Right ventricle myocardium inferior (tissue), 1 donor: ENCODE measurements at regions of chrX and their contacts with region 1.

Region 1: DNA sequence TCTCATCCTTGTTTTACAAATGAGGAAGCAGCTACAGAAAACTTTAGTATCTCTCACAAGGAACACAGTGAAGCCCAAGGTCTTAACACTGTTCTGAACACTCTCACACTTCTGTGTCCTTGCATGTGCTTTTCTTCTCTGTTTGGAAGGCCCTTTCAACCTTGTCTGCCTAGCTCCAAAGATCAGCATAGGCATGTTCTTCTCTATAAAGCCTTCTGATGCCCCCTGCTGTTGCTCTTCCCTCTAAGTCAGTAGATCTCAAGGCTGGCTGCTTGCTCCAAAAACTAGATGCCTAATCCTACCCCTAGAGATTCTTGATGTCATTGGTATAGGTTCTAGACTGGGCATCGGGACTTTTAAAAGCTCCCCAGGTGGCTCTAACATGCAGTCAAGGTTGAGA is 5.9 kb downstream of the APOO start:
- DNase-seq: no peak
- ATAC-seq: peak; percentile 92

Region 2: DNA sequence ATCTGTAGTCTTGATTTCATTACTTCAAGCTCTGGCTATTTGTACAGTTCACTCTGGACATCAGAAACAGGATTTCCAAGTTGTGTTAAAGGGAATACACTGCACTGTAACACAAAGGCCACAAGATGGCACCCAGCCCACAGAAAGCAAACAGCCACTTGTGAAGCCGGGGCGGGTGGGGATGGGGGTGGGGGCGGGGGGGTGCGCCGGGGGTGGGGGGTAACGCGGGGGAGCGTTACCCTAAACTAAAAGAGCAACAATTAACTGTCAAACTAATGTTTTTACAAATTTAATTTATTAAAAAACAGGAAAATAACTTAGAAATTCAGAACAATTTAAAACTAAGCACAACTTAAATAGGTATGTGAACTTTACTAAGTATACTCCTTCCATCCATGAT is 207.2 kb before region 1 on chrX:
- intact Hi-C with region 1: loop called (anchors 2 kb)
- DNase-seq: peak; percentile 71
- ATAC-seq: no peak

Region 3: GRCh38 chrX:23742697-23743622 is 158.8 kb before region 1 on chrX and contains the start of gene ACOT9:
- intact Hi-C with region 1: loop called (anchors 2 kb)
- DNase-seq: peak; percentile 95
- ATAC-seq: peak; percentile 99
- total RNA-seq, gene ACOT9: 50.1 TPM

Region 4: DNA sequence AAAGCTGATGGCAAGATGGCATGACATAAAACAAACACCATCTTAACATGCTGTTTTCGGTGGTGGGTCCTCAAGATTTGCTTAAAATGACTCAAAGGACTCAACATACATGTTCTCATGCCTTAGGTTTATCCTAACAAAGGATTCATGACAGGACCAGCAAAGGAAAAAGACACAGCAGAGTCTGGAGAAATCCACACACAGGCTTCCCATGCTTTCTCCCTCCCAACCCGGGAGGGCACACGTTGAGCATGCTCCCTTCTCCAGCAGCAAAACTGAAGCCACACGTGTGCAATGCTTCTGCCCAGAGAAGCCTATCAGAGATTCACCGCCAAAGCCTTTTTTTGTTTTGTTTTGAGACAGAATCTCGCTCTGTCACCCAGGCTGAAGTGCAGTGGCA is 79.0 kb before region 1 on chrX:
- intact Hi-C with region 1: no loop called
- DNase-seq: no peak
- ATAC-seq: no peak